MCF 10A (cell line): ENCODE measurements at regions of chr1 and their contacts with region 1.

Region 1: GRCh38 chr1:55893155-55893554 is 678.0 kb upstream of the USP24 start:
- DNase-seq: peak; percentile 68
- H3K4me3 Mint-ChIP-seq: no peak overlapping the region
- H3K27ac Mint-ChIP-seq: no peak overlapping the region
- H3K4me1 Mint-ChIP-seq: no peaks in the 10 kb centered on the region
- H3K27me3 Mint-ChIP-seq: no peaks in the 10 kb centered on the region
- CTCF ChIP-seq: peak; percentile 41

Region 2: GRCh38 chr1:55478742-55479141 is 414.4 kb before region 1 on chr1:
- CTCF ChIA-PET with region 1: interaction called, 3 read pairs
- POLR2A ChIA-PET with region 1: no interaction called
- intact Hi-C with region 1: loop called (anchors 2 kb)
- DNase-seq: peak; percentile 40
- H3K4me3 Mint-ChIP-seq: no peak overlapping the region
- H3K27ac Mint-ChIP-seq: no peak overlapping the region
- H3K4me1 Mint-ChIP-seq: peaks cover 12% of the 10 kb centered on the region
- H3K27me3 Mint-ChIP-seq: no peaks in the 10 kb centered on the region
- CTCF ChIP-seq: peak; percentile 34

Region 3: GRCh38 chr1:55506686-55507577 is 386.2 kb before region 1 on chr1:
- CTCF ChIA-PET with region 1: no interaction called
- POLR2A ChIA-PET with region 1: no interaction called
- intact Hi-C with region 1: loop called (anchors 10 kb)
- DNase-seq: peak; percentile 34
- H3K4me3 Mint-ChIP-seq: no peak overlapping the region
- H3K27ac Mint-ChIP-seq: peak overlapping the region; percentile 28
- H3K4me1 Mint-ChIP-seq: peaks cover 14% of the 10 kb centered on the region
- H3K27me3 Mint-ChIP-seq: no peaks in the 10 kb centered on the region
- CTCF ChIP-seq: no peak

Region 4: GRCh38 chr1:56578963-56579875 is 686.1 kb after region 1 on chr1 and contains the start of gene PLPP3:
- CTCF ChIA-PET with region 1: interaction called, 7 read pairs
- POLR2A ChIA-PET with region 1: interaction called, 3 read pairs
- intact Hi-C with region 1: loop called (anchors 2 kb)
- DNase-seq: peak; percentile 85
- H3K4me3 Mint-ChIP-seq: peak within 1 kb of the TSS; percentile 97
- H3K27ac Mint-ChIP-seq: peak within 1 kb of the TSS; percentile 33
- H3K4me1 Mint-ChIP-seq: no peaks in the 10 kb centered on the region
- H3K27me3 Mint-ChIP-seq: no peaks in the 10 kb centered on the region
- CTCF ChIP-seq: no peak
- total RNA-seq, gene PLPP3: 0.84 and 1.3 TPM in 2 replicates